Activated naive CD4-positive, alpha-beta T cell treated with anti-CD3 and anti-CD28 coated beads for 36 hours (primary cell): ENCODE measurements at regions of chr19 and their contacts with region 1.

Region 1: DNA sequence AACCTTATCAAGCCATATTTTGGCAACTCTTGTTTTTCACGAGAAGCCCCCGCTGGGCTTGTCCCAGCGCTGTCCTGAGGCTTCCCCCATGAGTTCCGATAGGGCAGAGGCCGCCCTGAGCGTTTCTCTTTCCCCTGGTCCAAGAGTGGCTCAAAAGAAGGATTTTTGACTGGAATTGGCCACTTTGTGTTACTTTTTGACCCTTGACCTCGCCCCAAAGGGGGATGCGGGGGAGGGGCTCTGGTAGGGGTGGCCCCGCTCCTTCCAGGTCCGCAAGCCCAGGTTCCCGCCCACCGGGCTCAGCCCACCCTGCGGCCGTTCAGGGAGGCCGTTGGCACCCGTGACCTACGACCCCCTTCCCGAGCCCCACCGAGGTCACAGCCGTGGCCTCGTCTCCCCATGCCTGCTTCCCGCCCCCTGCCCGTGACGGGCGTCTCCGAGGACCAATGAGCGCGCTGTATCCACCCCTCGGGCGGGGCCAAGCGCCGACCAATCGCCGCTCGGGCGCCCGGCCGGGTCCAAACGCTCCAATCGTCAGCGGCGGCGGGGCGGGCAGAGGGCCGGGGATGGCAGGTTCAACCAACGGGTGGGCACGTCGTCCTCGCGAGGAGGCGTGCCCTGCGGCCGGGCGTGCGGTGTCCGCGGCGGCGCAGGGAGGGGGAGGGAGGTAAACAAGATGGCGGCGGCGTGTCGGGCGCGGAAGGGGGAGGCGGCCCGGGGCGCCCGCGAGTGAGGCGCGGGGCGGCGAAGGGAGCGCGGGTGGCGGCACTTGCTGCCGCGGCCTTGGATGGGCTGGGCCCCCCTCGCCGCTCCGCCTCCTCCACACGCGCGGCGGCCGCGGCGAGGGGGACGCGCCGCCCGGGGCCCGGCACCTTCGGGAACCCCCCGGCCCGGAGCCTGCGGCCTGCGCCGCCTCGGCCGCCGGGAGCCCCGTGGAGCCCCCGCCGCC is at the start of gene STK11:
- DNase-seq: peak; percentile 99
- H3K4me3 Mint-ChIP-seq: peak within 1 kb of the TSS; percentile 93
- H3K27ac Mint-ChIP-seq: peak within 1 kb of the TSS; percentile 84
- H3K4me1 Mint-ChIP-seq: peaks cover 32% of the 10 kb centered on the region
- H3K27me3 Mint-ChIP-seq: no peaks in the 10 kb centered on the region
- total RNA-seq, gene STK11: 65.1 to 66.1 TPM

Region 2: GRCh38 chr19:1221141-1221903 is 15.9 kb after region 1 on chr19:
- CTCF ChIA-PET with region 1: no interaction called
- intact Hi-C with region 1: no loop called
- DNase-seq: no peak
- H3K4me3 Mint-ChIP-seq: no peak overlapping the region
- H3K27ac Mint-ChIP-seq: no peak overlapping the region
- H3K4me1 Mint-ChIP-seq: peaks cover 2% of the 10 kb centered on the region
- H3K27me3 Mint-ChIP-seq: no peaks in the 10 kb centered on the region

Region 3: DNA sequence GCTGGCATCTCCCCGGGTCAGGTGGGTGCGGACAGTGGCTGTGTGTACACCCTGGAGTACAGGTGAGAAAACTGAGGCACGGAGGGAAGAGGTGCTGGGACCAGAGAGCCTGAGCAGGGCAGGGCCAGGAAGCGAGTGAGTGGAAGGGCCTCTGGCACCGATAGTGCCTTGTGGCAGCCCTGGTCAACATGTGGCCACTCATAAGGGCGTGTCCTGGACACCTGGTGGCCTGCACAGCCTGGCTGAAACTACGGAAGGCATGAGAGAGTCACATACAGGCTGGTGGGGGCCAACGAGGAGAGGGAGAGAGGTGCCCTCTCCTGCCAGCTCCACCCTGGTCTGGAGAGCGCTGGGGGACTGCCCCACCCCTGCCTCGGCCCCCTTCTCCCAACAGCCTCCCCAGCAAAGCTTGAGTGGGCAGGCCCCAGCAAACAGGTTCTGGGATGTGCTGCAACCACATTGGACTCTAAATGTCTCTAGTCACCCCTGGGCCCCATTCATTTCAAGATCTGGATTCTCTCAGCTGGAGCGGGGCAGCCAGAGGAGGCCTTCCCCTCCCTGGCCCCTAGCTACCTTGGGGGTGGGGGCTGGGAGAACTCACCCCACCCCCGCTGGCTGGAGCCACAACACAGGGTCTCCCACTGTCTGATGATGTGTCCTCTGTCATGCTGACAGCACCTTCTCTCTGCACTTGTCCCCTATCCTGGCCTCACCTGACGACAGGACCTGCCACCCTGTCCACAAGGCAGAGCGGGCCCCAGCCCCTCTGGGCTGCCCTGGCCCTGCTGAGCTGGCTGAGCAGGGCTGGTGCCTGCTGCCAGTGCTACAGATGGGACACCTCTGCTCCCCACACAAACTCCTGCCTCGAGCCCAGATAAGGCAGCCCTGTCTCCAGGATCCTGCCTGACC is 26.6 kb after region 1 on chr19:
- CTCF ChIA-PET with region 1: no interaction called
- intact Hi-C with region 1: no loop called
- DNase-seq: no peak
- H3K4me3 Mint-ChIP-seq: no peak overlapping the region
- H3K27ac Mint-ChIP-seq: no peak overlapping the region
- H3K4me1 Mint-ChIP-seq: no peaks in the 10 kb centered on the region
- H3K27me3 Mint-ChIP-seq: no peaks in the 10 kb centered on the region

Region 4: GRCh38 chr19:1269065-1269477 is 63.7 kb after region 1 on chr19 and contains the start of gene CIRBP:
- CTCF ChIA-PET with region 1: interaction called, 3 read pairs
- intact Hi-C with region 1: loop called (anchors 1 kb)
- DNase-seq: peak; percentile 99
- H3K4me3 Mint-ChIP-seq: peak within 1 kb of the TSS; percentile 87
- H3K27ac Mint-ChIP-seq: peak within 1 kb of the TSS; percentile 83
- H3K4me1 Mint-ChIP-seq: peaks cover 64% of the 10 kb centered on the region
- H3K27me3 Mint-ChIP-seq: no peaks in the 10 kb centered on the region
- total RNA-seq, gene CIRBP: 167 to 183 TPM